Activated naive CD4-positive, alpha-beta T cell treated with anti-CD3 and anti-CD28 coated beads, Interleukin-2, amount 10 ng/mL, durations not matched to agents 7 days and 5 days (primary cell): ENCODE measurements at regions of chr1 and their contacts with region 1.

Region 1: GRCh38 chr1:158112994-158113758 is 67.5 kb upstream of the CD1D start:
- DNase-seq: peak; percentile 44
- H3K4me3 Mint-ChIP-seq: peak overlapping the region; percentile 35
- H3K27ac Mint-ChIP-seq: no peak overlapping the region
- H3K4me1 Mint-ChIP-seq: peaks cover 11% of the 10 kb centered on the region
- H3K27me3 Mint-ChIP-seq: peaks cover 69% of the 10 kb centered on the region

Region 2: DNA sequence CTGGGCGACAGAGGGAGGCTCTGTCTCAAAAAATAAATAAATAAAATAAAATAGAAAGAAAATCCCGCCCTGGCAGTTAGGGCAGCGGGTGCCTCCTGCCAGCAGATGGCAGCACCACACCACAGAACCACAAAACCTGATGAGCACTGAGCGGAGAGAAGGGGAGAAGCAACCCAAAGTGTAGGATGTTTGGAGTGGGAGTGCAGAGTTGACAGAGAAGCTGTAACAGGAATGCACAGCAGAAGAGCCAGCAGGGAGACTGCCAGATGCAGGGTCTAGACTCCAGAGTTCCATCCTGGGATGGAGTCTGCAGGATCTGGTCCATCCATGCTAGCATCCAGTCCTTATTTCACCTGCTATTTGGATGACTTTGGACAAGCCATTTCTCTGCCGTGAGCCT is 149.5 kb before region 1 on chr1:
- CTCF ChIA-PET with region 1: no interaction called
- DNase-seq: peak; percentile 63
- H3K4me3 Mint-ChIP-seq: no peak overlapping the region
- H3K27ac Mint-ChIP-seq: no peak overlapping the region
- H3K4me1 Mint-ChIP-seq: no peaks in the 10 kb centered on the region
- H3K27me3 Mint-ChIP-seq: peaks cover 19% of the 10 kb centered on the region

Region 3: GRCh38 chr1:158095737-158096335 is 17.3 kb before region 1 on chr1:
- CTCF ChIA-PET with region 1: interaction called, 171 read pairs
- DNase-seq: peak; percentile 59
- H3K4me3 Mint-ChIP-seq: no peak overlapping the region
- H3K27ac Mint-ChIP-seq: no peak overlapping the region
- H3K4me1 Mint-ChIP-seq: no peaks in the 10 kb centered on the region
- H3K27me3 Mint-ChIP-seq: no peaks in the 10 kb centered on the region

Region 4: DNA sequence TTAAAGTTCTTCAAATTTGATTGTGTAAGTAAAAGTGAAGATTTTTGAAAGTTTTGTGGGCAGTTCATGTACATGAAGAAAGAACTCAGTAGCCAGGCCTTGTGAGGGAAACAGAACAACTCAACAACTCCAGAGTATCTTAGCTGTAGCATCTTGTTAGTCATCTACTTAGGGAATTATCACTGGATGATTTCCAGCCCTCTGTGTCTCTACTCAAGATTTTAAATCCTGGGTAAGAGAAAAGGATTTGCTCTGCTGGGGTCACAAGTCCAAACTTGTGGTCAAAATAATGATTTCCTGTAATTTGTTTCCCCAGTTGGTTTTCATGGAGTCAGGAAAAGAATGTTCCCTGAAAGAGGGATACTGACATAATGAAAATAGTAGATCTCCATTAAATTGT is 277.9 kb after region 1 on chr1:
- CTCF ChIA-PET with region 1: no interaction called
- DNase-seq: no peak
- H3K4me3 Mint-ChIP-seq: no peak overlapping the region
- H3K27ac Mint-ChIP-seq: no peak overlapping the region
- H3K4me1 Mint-ChIP-seq: no peaks in the 10 kb centered on the region
- H3K27me3 Mint-ChIP-seq: no peaks in the 10 kb centered on the region